Natural killer cell (primary cell): ENCODE measurements at regions of chr18 and their contacts with region 1.

Region 1: DNA sequence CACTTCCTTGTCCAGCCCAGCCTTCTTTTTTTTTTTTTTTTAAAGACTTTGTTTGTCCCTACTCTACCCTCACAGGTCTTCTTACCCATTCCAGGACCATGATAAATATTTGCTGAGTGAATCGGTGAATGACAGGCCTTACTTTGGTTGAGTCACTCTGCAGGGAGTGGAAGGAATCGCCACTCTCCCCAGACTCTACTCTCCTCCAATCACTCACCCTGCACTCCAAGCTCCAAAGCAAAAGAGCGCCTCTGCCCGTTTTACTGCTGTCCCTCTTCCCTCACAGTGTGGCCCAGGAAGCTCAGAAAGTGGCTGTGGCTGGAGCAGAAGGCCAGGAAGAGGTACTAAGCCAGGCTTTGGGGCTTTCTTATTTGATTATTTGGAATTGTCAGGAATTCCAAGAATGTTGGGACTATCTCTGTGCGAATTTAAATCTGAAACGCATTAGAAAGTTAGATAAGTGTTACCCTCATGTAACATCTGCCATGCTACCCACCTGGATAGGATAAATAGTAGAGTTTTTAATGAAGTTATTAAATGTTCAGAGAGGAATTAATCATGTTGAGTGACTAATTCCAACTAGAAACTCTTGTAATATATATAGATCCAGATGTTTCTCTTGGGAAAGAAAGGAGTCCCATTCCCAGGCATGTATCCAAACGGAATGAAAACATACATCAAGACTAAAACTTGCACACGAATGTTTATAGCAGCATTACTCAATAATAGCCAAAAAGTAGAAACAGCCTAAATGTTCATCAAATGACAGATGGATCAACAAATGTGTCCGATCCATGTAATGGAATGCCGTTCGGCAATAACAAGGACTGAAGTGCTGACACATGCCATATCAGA is 43.0 kb upstream of the CHMP1B start:
- DNase-seq: no peak
- ATAC-seq: no peak
- H3K4me3 ChIP-seq: no peak overlapping the region
- H3K4me3 Mint-ChIP-seq: no peak overlapping the region
- H3K27ac ChIP-seq: no peak overlapping the region
- H3K27ac Mint-ChIP-seq: no peak overlapping the region
- H3K4me1 ChIP-seq: no peaks in the 10 kb centered on the region
- H3K4me1 Mint-ChIP-seq: peaks cover 10 to 13% of the 10 kb centered on the region in 2 donors
- H3K27me3 ChIP-seq: no peaks in the 10 kb centered on the region
- H3K27me3 Mint-ChIP-seq: no peaks in the 10 kb centered on the region
- CTCF ChIP-seq: no peak

Region 2: DNA sequence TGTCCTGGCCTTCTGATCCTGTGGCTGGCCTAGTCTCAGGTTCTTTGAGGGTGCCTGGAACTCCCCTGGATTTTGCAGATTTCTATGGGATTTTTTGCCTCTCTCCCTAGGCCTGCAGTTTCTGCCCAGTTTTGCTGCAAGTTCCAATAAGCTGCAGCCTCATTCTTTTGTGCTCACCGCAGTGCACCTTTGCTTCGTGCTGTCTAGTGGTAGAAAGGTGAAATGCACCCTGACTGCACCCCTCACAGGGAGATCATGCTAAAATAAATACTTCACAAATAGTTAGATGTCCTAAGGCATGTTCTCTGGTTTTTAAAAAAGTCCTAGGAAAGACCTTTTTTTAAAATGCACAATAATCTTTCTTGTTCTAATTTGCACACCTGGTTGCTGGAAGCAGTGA is 46.7 kb before region 1 on chr18:
- intact Hi-C with region 1: loop called (anchors 5 kb)
- DNase-seq: no peak
- ATAC-seq: no peak
- H3K4me3 ChIP-seq: no peak overlapping the region
- H3K4me3 Mint-ChIP-seq: peak overlapping the region; percentile 40
- H3K27ac ChIP-seq: peak overlapping the region; percentile 64
- H3K27ac Mint-ChIP-seq: peak overlapping the region; percentile 72 to 81
- H3K4me1 ChIP-seq: peaks cover 13% of the 10 kb centered on the region
- H3K4me1 Mint-ChIP-seq: peaks cover 22 to 23% of the 10 kb centered on the region in 2 donors
- H3K27me3 ChIP-seq: no peaks in the 10 kb centered on the region
- H3K27me3 Mint-ChIP-seq: peaks cover 7 to 12% of the 10 kb centered on the region in 2 donors
- CTCF ChIP-seq: no peak